Ascending aorta (tissue), 2 donors: ENCODE measurements at regions of chr2 and their contacts with region 1.

Region 1: DNA sequence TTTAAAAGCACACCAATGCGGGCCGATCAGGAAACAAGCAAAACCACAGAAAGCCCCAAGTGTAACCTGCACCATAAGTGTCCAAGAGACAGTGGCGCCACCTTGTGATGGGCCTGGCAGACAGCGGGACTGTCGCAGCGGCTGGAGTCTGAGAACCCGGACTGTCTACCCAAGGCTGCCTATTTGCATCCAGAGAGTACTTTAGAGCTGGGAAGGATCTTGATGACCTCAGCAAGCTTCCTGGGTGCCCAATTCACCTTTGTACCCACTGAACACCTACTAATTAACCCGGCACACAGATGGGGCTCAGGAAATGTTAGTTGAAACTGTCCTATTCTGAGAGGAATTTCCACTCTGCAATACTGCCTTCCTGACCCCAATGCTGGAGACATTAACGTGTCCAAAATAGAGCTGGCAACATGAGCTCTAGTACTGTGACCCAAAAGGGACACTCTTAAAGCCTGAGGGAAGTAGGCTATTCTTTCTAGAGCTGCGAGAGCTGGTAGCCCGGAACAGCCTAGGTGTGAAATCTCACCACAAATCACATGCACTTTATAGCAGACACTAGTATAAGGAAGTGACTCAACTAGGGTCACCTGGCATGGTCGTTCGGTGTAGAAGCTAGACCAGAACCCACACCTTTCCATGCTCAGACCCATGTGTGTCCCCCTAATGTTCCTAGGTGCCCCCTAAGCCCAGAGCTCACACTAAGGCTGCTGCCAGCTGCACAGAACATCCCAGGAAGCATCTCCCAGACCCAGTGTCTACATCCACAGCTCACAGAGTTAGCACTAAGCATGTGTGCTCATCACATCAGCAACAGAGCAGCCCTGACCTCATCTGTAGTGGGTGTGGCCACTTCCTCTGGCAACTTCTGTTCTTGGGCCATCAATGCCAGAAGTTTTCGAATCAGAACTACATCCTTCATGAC is 25.4 kb downstream of the POLR1A start:
- DNase-seq: peak; percentile 50 to 89
- H3K4me3 ChIP-seq: no peak overlapping the region
- H3K27ac ChIP-seq: no peak overlapping the region
- H3K4me1 ChIP-seq: peaks cover 0 to 3% of the 10 kb centered on the region in 2 donors
- H3K27me3 ChIP-seq: no peaks in the 10 kb centered on the region
- CTCF ChIP-seq: peak; percentile 66 to 85 (median 71)

Region 2: GRCh38 chr2:85826990-85827878 is 253.0 kb before region 1 on chr2:
- intact Hi-C with region 1: loop called (anchors 1 kb)
- DNase-seq: peak in 1 of 2 donors; percentile 85
- H3K4me3 ChIP-seq: peak overlapping the region in 1 of 2 donors; percentile 55
- H3K27ac ChIP-seq: no peak overlapping the region
- H3K4me1 ChIP-seq: no peaks in the 10 kb centered on the region
- H3K27me3 ChIP-seq: no peaks in the 10 kb centered on the region
- CTCF ChIP-seq: peak; percentile 89 to 95 (median 90)

Region 3: DNA sequence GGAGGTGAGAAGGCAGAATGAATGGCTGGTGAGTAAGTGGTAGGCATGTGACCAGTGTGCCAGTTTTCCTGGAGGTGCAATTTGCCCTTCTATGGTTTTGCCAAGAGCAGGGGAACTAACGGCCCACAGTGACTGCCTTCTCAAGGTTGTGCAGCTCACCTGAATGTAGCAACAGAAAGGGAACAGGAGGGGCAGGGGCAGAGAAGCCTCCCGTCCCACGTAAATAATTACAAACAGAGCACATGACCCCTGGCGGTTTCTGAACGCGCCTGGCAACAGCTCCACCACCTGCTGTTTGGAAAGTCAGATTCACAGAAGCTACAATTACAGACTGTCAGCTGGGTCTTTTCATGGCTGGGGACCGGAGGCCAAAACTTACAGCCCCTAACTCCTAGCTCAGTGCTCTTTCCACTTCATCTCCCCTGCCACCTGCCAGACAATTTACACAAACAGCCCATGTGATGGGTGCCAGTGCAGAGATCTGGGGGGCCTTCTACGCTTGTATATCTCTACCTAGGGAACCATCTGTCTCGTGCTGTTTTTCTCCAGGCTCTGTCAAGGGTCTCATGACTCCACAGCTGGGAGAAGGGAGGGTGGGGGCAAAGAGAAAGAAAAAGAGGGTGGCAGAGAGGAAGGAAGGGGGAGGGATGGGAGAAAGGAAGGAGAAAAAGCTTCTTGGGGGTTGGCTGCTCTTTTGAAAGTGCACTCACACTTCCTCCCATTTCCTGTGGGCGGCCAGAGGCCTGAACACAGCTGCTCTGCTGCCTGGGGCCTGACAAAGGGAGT is 44.2 kb before region 1 on chr2:
- intact Hi-C with region 1: no loop called
- DNase-seq: peak; percentile 54 to 83
- H3K4me3 ChIP-seq: no peak overlapping the region
- H3K27ac ChIP-seq: peak overlapping the region; percentile 84 to 89
- H3K4me1 ChIP-seq: peaks cover 22 to 28% of the 10 kb centered on the region in 2 donors
- H3K27me3 ChIP-seq: no peaks in the 10 kb centered on the region
- CTCF ChIP-seq: peak in 2 of 3 experiments; percentile 15 to 17